ENCODE measurements at regions of chrX and their contacts with region 1.

Region 1: GRCh38 chrX:103214870-103215424 is at the start of gene BEX4:
- DNase-seq: peak; percentile 76 to 83 (median 78)
- H3K4me3 ChIP-seq: peak within 1 kb of the TSS; percentile 9 to 17
- H3K4me3 Mint-ChIP-seq: peak within 1 kb of the TSS; percentile 82 to 92 (median 88)
- H3K27ac ChIP-seq: peak within 1 kb of the TSS; percentile 77
- H3K27ac Mint-ChIP-seq: peak within 1 kb of the TSS; percentile 74 to 95 (median 90)
- H3K4me1 ChIP-seq: peaks cover 12% of the 10 kb centered on the region
- H3K4me1 Mint-ChIP-seq: peaks cover 0 to 17% (median 4%) of the 10 kb centered on the region in 4 donors
- H3K27me3 ChIP-seq: no peaks in the 10 kb centered on the region
- H3K27me3 Mint-ChIP-seq: peaks cover 0 to 1% of the 10 kb centered on the region in 2 donors
- total RNA-seq, gene BEX4: 38.9 to 39.6 TPM

Region 2: GRCh38 chrX:102883176-102883915 is 331.6 kb before region 1 on chrX:
- CTCF ChIA-PET with region 1: no interaction called
- POLR2A ChIA-PET with region 1: no interaction called
- intact Hi-C with region 1: no loop called
- DNase-seq: no peak
- H3K4me3 ChIP-seq: no peak overlapping the region
- H3K4me3 Mint-ChIP-seq: no peak overlapping the region
- H3K27ac ChIP-seq: no peak overlapping the region
- H3K27ac Mint-ChIP-seq: no peak overlapping the region
- H3K4me1 ChIP-seq: no peaks in the 10 kb centered on the region
- H3K4me1 Mint-ChIP-seq: no peaks in the 10 kb centered on the region
- H3K27me3 ChIP-seq: no peaks in the 10 kb centered on the region
- H3K27me3 Mint-ChIP-seq: no peaks in the 10 kb centered on the region

Region 3: DNA sequence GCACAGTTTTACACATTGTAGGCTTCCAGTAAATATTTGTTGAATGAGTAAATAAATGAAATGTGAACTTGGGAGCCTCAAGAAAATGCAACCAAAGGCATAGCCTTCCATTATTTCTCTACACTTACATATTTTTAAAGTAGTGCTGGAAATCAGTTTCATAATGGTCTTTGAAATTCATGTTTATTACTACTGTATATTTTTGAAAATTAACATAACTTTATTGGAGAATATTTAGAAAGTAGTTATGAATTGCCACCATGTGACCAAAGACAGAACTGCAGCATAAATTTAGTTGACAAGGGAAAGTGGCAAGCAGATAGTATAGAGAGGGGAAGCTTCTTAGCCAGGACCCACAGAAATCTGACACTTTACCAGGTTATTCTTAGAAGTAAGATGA is 33.6 kb after region 1 on chrX:
- CTCF ChIA-PET with region 1: interaction called, 15 read pairs
- POLR2A ChIA-PET with region 1: interaction called, 10 read pairs
- intact Hi-C with region 1: loop called (anchors 1 kb)
- DNase-seq: peak in 3 of 5 donors; percentile 10 to 19 (median 11)
- H3K4me3 ChIP-seq: no peak overlapping the region
- H3K4me3 Mint-ChIP-seq: no peak overlapping the region
- H3K27ac ChIP-seq: no peak overlapping the region
- H3K27ac Mint-ChIP-seq: no peak overlapping the region
- H3K4me1 ChIP-seq: peaks cover 4% of the 10 kb centered on the region
- H3K4me1 Mint-ChIP-seq: peaks cover 2 to 16% (median 6%) of the 10 kb centered on the region in 4 donors
- H3K27me3 ChIP-seq: no peaks in the 10 kb centered on the region
- H3K27me3 Mint-ChIP-seq: no peaks in the 10 kb centered on the region

Region 4: DNA sequence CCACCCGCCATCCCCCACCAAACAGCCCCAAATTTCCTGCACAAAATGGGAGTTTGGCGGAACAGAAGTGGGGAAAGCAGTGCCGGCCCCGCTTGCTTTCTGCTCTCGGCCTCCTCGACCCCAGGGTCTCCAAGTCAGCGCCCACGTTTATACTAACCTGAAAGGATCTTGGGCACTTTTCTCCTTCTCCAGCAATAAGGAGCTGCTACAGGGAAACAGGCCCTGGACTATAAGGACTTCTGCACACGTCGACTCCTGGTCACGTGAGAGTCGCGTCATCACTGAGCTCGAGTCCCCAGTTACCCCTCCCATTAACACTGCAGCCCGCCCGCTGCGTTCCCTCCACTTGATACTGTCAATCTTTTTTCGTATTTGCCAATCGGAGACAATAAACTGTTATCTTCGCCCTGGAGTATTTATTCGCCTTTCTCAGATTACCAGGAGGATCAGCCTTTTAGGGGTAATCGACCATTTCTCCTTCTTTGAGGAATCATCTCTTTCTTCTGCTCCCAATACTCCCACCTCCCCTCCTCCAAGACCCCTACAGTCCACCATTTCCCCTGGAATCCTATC is 40.1 kb after region 1 on chrX and contains the start of gene TCEAL8:
- CTCF ChIA-PET with region 1: interaction called, 15 read pairs
- POLR2A ChIA-PET with region 1: interaction called, 10 read pairs
- intact Hi-C with region 1: loop called (anchors 2 kb)
- DNase-seq: peak; percentile 41 to 76 (median 54)
- H3K4me3 ChIP-seq: peak within 1 kb of the TSS; percentile 47 to 83
- H3K4me3 Mint-ChIP-seq: peak within 1 kb of the TSS; percentile 90 to 97 (median 96)
- H3K27ac ChIP-seq: peak within 1 kb of the TSS; percentile 73
- H3K27ac Mint-ChIP-seq: peak within 1 kb of the TSS; percentile 91 to 97 (median 95)
- H3K4me1 ChIP-seq: peaks cover 9% of the 10 kb centered on the region
- H3K4me1 Mint-ChIP-seq: peaks cover 13 to 38% (median 18%) of the 10 kb centered on the region in 4 donors
- H3K27me3 ChIP-seq: no peaks in the 10 kb centered on the region
- H3K27me3 Mint-ChIP-seq: no peaks in the 10 kb centered on the region
- total RNA-seq, gene TCEAL8: 33.9 to 35.3 TPM

Region 5: DNA sequence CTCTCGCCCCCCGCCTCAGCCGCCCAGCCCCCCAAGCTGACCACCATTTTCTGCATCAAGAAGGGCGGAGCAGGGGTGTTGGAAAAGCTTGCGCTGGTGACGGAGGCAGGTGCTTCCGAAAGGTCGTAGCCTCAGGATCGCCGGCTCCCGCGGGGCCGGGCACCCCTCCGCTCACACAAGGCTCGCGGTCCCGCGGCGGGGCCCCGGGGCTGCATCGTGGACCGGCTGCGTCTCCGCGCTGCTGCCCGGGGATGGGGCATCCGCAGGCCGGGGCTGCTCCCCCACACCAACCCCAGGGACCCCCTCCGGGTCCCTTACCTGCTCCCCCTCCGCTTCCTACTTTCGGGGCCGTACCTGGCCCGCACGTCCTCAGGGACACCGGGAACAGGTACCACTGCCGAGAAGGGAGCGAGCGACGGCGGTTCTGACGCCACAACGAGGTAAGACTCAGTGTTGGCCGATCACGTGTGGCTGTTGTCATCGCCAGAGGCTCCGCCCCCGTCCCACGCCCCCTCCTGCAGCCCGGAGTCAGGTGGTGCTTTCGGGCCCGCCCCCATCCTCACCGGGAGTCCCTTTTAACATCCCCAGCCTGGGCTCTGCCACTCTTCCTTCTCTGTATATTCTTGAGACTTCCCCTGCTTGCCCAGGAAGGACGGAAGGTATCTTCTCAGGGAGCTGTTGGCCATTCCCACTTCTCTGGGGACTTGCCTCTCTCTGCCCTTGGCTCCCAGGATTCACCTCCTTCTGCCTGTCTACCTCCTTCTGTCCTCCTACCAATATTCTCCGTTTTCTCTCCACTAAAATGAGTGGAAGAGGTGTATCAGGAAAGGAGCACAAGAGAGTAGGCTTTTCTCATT is 95.8 kb after region 1 on chrX and contains the start of gene BEX2:
- CTCF ChIA-PET with region 1: no interaction called
- POLR2A ChIA-PET with region 1: interaction called, 4 read pairs
- intact Hi-C with region 1: loop called (anchors 5 kb)
- DNase-seq: peak; percentile 79 to 89 (median 84)
- H3K4me3 ChIP-seq: peak within 1 kb of the TSS in 1 of 2 donors; percentile 71
- H3K4me3 Mint-ChIP-seq: peak within 1 kb of the TSS; percentile 73 to 86 (median 80)
- H3K27ac ChIP-seq: peak within 1 kb of the TSS; percentile 78
- H3K27ac Mint-ChIP-seq: peak within 1 kb of the TSS; percentile 54 to 89 (median 83)
- H3K4me1 ChIP-seq: peaks cover 7% of the 10 kb centered on the region
- H3K4me1 Mint-ChIP-seq: peaks cover 0 to 5% (median 4%) of the 10 kb centered on the region in 4 donors
- H3K27me3 ChIP-seq: no peaks in the 10 kb centered on the region
- H3K27me3 Mint-ChIP-seq: no peaks in the 10 kb centered on the region
- total RNA-seq, gene BEX2: 41.9 to 48.2 TPM

Region 6: DNA sequence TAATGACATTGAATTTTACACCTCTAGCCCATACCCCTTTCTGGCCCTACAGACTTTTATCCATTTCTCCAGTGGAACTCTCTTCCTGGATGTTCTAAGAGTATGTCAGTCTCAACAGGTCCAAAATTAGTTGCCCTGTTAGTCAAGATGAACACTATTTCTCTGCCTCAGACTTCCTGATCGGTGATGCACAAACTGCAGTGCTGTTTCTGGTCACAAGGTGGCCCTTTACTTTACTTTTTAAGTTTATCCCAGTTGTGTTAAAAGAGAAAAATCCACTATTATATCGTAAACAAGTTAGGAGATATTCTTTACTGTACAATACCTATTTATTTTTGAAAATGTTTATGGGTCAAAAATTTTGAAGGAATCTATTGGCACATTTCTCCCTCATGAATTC is 128.2 kb after region 1 on chrX:
- CTCF ChIA-PET with region 1: interaction called, 3 read pairs
- POLR2A ChIA-PET with region 1: no interaction called
- intact Hi-C with region 1: loop called (anchors 10 kb)
- DNase-seq: peak; percentile 32 to 43 (median 36)
- H3K4me3 ChIP-seq: no peak overlapping the region
- H3K4me3 Mint-ChIP-seq: no peak overlapping the region
- H3K27ac ChIP-seq: no peak overlapping the region
- H3K27ac Mint-ChIP-seq: no peak overlapping the region
- H3K4me1 ChIP-seq: peaks cover 5% of the 10 kb centered on the region
- H3K4me1 Mint-ChIP-seq: peaks cover 0 to 3% (median 1%) of the 10 kb centered on the region in 4 donors
- H3K27me3 ChIP-seq: no peaks in the 10 kb centered on the region
- H3K27me3 Mint-ChIP-seq: peaks cover 0 to 1% of the 10 kb centered on the region in 2 donors

Region 7: GRCh38 chrX:103464774-103465117 is 249.8 kb after region 1 on chrX:
- CTCF ChIA-PET with region 1: interaction called, 33 read pairs
- POLR2A ChIA-PET with region 1: interaction called, 10 read pairs
- intact Hi-C with region 1: loop called (anchors 1 kb)
- DNase-seq: peak; percentile 71 to 78 (median 73)
- H3K4me3 ChIP-seq: peak overlapping the region in 1 of 2 donors; percentile 72
- H3K4me3 Mint-ChIP-seq: peak overlapping the region; percentile 86 to 96 (median 92)
- H3K27ac ChIP-seq: peak overlapping the region; percentile 37
- H3K27ac Mint-ChIP-seq: peak overlapping the region; percentile 78 to 95 (median 91)
- H3K4me1 ChIP-seq: peaks cover 21% of the 10 kb centered on the region
- H3K4me1 Mint-ChIP-seq: peaks cover 13 to 39% (median 26%) of the 10 kb centered on the region in 4 donors
- H3K27me3 ChIP-seq: no peaks in the 10 kb centered on the region
- H3K27me3 Mint-ChIP-seq: no peaks in the 10 kb centered on the region

Region 8: DNA sequence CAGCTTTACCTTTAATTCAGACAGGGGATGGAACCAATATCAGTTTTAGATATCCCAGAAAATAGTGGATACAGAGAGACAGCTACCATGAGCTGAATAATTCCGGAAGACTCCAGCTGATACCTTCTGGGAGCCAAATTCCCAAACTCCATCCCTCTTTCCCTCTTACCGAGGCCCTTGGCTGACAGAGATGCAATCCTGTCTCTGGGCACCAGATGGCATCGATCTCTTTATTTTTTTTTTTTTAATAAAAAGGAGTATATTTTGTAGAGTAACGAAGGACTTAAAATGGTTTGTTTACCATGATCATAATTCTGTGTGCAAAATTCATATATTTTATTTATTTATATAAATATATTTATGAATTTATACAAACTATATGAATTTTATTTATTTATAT is 273.4 kb after region 1 on chrX:
- CTCF ChIA-PET with region 1: interaction called, 27 read pairs
- POLR2A ChIA-PET with region 1: no interaction called
- intact Hi-C with region 1: loop called (anchors 1 kb)
- DNase-seq: no peak
- H3K4me3 ChIP-seq: no peak overlapping the region
- H3K4me3 Mint-ChIP-seq: no peak overlapping the region
- H3K27ac ChIP-seq: no peak overlapping the region
- H3K27ac Mint-ChIP-seq: no peak overlapping the region
- H3K4me1 ChIP-seq: peaks cover 4% of the 10 kb centered on the region
- H3K4me1 Mint-ChIP-seq: peaks cover 3 to 7% (median 5%) of the 10 kb centered on the region in 4 donors
- H3K27me3 ChIP-seq: no peaks in the 10 kb centered on the region
- H3K27me3 Mint-ChIP-seq: no peaks in the 10 kb centered on the region